Uterus (tissue), 4 donors: ENCODE measurements at regions of chr12 and their contacts with region 1.

Region 1: GRCh38 chr12:2154050-2154449 is 101.3 kb downstream of the CACNA1C start:
- DNase-seq: no peak
- H3K4me3 ChIP-seq: no peak overlapping the region
- H3K27ac ChIP-seq: peak overlapping the region; percentile 59 to 64
- H3K4me1 ChIP-seq: no peaks in the 10 kb centered on the region
- H3K27me3 ChIP-seq: no peaks in the 10 kb centered on the region
- CTCF ChIP-seq: no peak
- POLR2A ChIP-seq: no peak

Region 2: GRCh38 chr12:2064071-2064507 is 90.0 kb before region 1 on chr12:
- intact Hi-C with region 1: loop called (anchors 10 kb)
- DNase-seq: no peak
- H3K4me3 ChIP-seq: peak overlapping the region in 1 of 2 donors; percentile 8
- H3K27ac ChIP-seq: peak overlapping the region; percentile 71 to 74
- H3K4me1 ChIP-seq: peaks cover 0 to 4% of the 10 kb centered on the region in 2 donors
- H3K27me3 ChIP-seq: no peaks in the 10 kb centered on the region
- CTCF ChIP-seq: no peak
- POLR2A ChIP-seq: no peak